Right cardiac atrium (tissue), 5 donors: ENCODE measurements at regions of chr10 and their contacts with region 1.

Region 1: GRCh38 chr10:104337974-104338735 is at the start of gene ITPRIP:
- DNase-seq: peak; percentile 81 to 91 (median 88)
- ATAC-seq: peak; percentile 80 to 89
- H3K4me3 ChIP-seq: peak within 1 kb of the TSS; percentile 91
- H3K27ac ChIP-seq: peak within 1 kb of the TSS; percentile 100
- H3K4me1 ChIP-seq: peaks cover 26% of the 10 kb centered on the region
- H3K27me3 ChIP-seq: no peaks in the 10 kb centered on the region
- total RNA-seq, gene ITPRIP: 29.1 to 83.3 (median 41.9) TPM

Region 2: DNA sequence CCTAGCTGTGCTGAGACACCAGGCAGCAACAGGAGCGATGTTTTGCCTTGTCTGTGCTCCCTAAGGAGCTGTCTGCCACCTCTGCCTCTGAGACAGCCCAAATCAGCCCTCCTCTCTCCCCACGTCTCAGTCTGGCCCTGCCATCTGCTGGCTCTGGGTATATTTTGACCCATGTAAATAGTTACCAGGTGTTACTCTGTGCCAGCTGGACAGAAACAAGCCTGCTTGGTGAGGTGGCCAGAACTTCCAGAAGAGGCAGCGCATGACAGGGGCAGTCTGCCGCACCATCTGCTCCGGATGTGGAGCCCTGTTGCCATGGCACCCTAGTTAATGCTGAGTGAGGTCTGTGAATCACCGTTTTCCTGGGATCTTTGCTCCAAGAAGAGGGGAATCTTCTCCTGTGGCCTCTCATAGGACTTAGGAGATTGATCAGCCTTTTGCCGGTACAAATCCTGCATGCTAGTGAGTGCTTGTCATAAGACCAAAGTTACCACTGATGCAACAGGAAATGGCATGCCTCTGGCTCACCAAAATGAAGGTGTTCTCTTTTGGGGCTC is 37.3 kb before region 1 on chr10:
- intact Hi-C with region 1: loop called in 3 of 4 experiments (anchors 5 kb)
- DNase-seq: peak; percentile 81 to 85 (median 84)
- ATAC-seq: peak; percentile 69 to 83
- H3K4me3 ChIP-seq: no peak overlapping the region
- H3K27ac ChIP-seq: peak overlapping the region; percentile 100
- H3K4me1 ChIP-seq: peaks cover 25% of the 10 kb centered on the region
- H3K27me3 ChIP-seq: no peaks in the 10 kb centered on the region